Testis (tissue), 5 donors: ENCODE measurements at regions of chr10 and their contacts with region 1.

Region 1: GRCh38 chr10:129033790-129034272 is 433.2 kb upstream of the MGMT start:
- DNase-seq: no peak
- H3K4me3 ChIP-seq: no peak overlapping the region
- H3K27ac ChIP-seq: no peak overlapping the region
- H3K4me1 ChIP-seq: peaks cover 4% of the 10 kb centered on the region
- H3K27me3 ChIP-seq: peaks cover 3% of the 10 kb centered on the region
- CTCF ChIP-seq: no peak
- POLR2A ChIP-seq: no peak

Region 2: DNA sequence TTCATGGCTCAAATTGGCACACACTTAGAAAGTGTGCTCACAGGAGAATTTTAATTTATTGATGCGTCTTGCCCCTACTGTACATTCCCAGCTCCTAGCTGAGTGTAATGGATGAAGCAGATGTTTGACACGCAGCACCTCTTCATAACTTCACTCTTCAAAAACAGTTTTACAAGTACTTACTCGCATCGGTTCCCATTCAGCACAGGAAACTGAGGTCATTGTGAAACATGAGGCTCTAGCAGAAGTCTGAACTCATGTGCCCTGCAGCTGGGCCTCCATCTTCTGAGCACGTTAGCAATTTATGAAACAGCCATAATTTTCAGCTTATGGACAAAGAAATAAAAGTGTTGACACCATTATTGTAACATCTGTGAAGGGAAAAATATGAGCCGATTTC is 125.7 kb before region 1 on chr10:
- intact Hi-C with region 1: no loop called
- DNase-seq: no peak
- H3K4me3 ChIP-seq: no peak overlapping the region
- H3K27ac ChIP-seq: no peak overlapping the region
- H3K4me1 ChIP-seq: no peaks in the 10 kb centered on the region
- H3K27me3 ChIP-seq: no peaks in the 10 kb centered on the region
- CTCF ChIP-seq: no peak
- POLR2A ChIP-seq: no peak

Region 3: DNA sequence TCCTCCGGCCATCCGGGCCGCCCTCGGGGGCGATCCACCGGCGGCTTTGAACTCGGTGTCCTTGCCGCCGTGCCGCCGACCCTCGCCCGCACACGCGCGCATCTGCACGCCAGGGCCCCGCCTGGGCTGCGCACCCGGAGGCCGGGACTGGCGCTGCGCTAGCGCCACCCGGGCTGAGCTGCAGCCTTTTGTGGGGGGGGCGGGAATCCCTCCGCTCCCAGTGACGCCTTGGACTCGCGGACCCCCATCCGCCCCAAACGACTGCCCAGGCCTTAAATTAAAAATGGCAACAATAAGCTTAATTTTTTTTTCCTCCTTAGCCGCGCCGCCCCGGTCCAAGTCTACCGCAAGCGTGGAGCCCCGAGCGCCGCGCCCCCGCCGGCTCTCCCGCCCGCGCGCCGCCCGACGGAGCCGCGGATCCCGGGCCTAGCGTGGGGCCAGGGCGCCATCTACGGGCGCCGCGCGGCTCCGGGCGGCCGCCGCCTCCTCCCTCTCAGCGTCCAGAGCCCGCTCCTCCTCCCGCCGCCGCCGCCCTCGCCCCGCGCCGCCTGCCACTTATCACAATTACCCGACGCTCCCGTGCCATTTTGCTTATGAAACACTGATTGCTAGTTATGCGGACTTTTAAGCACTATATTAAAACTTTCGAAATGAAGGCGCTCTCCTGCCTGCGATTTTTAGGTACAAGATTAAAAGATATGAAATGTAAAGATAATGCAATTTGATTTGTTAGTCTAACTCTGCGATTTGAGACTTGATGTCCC is 937.7 kb after region 1 on chr10:
- intact Hi-C with region 1: loop called (anchors 2 kb)
- DNase-seq: no peak
- H3K4me3 ChIP-seq: peak overlapping the region; percentile 15 to 36
- H3K27ac ChIP-seq: no peak overlapping the region
- H3K4me1 ChIP-seq: peaks cover 3% of the 10 kb centered on the region
- H3K27me3 ChIP-seq: no peaks in the 10 kb centered on the region
- CTCF ChIP-seq: peak in 2 of 3 experiments; percentile 21 to 41
- POLR2A ChIP-seq: no peak